MCF 10A (cell line): ENCODE measurements at regions of chr21 and their contacts with region 1.

Region 1: GRCh38 chr21:14403681-14404318 is 20.9 kb upstream of the HSPA13 start:
- DNase-seq: peak; percentile 47
- H3K4me3 Mint-ChIP-seq: no peak overlapping the region
- H3K27ac Mint-ChIP-seq: no peak overlapping the region
- H3K4me1 Mint-ChIP-seq: no peaks in the 10 kb centered on the region
- H3K27me3 Mint-ChIP-seq: no peaks in the 10 kb centered on the region
- CTCF ChIP-seq: peak; percentile 50

Region 2: GRCh38 chr21:14773777-14774345 is 370.1 kb after region 1 on chr21:
- CTCF ChIA-PET with region 1: no interaction called
- POLR2A ChIA-PET with region 1: no interaction called
- intact Hi-C with region 1: loop called (anchors 1 kb)
- DNase-seq: peak; percentile 72
- H3K4me3 Mint-ChIP-seq: no peak overlapping the region
- H3K27ac Mint-ChIP-seq: no peak overlapping the region
- H3K4me1 Mint-ChIP-seq: no peaks in the 10 kb centered on the region
- H3K27me3 Mint-ChIP-seq: no peaks in the 10 kb centered on the region
- CTCF ChIP-seq: peak; percentile 65

Region 3: GRCh38 chr21:14864211-14865021 is 460.6 kb after region 1 on chr21:
- CTCF ChIA-PET with region 1: interaction called, 3 read pairs
- POLR2A ChIA-PET with region 1: no interaction called
- intact Hi-C with region 1: loop called (anchors 2 kb)
- DNase-seq: peak; percentile 78
- H3K4me3 Mint-ChIP-seq: no peak overlapping the region
- H3K27ac Mint-ChIP-seq: peak overlapping the region; percentile 29
- H3K4me1 Mint-ChIP-seq: peaks cover 30% of the 10 kb centered on the region
- H3K27me3 Mint-ChIP-seq: no peaks in the 10 kb centered on the region
- CTCF ChIP-seq: peak; percentile 45

Region 4: GRCh38 chr21:15552914-15553494 is 1149.2 kb after region 1 on chr21:
- CTCF ChIA-PET with region 1: interaction called, 3 read pairs
- POLR2A ChIA-PET with region 1: no interaction called
- intact Hi-C with region 1: loop called (anchors 1 kb)
- DNase-seq: peak; percentile 41
- H3K4me3 Mint-ChIP-seq: no peak overlapping the region
- H3K27ac Mint-ChIP-seq: no peak overlapping the region
- H3K4me1 Mint-ChIP-seq: no peaks in the 10 kb centered on the region
- H3K27me3 Mint-ChIP-seq: no peaks in the 10 kb centered on the region
- CTCF ChIP-seq: peak; percentile 40